Sigmoid colon (tissue), 7 donors: ENCODE measurements at regions of chr15 and their contacts with region 1.

Region 1: DNA sequence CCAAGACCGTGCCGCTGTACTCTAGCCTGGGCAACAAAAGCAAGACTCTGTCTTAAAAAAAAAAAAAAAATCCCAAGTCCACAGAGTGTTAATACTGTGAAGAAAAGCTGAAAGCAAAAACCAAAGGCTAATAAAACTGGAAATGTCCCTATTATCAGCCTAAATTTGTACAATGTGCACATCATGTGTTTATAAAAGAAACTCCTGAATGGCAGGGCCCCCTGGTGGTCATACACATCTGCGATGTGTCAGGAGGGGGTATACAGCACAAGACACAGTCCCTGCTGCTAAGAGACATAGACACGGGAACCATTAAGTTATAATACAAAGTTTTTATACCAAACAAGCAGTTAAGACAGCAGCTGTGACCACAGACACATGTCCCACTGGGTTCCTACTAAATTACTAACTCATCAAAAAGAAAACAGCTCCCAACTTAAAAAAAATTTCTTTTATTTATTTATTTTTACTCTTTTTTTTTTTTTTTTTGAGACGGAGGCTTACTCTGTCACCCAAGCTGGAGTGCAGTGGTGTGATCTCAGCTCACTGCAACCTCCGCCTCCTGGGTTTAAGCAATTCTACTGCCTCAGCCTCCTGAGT is 31.0 kb downstream of the IDH2 start:
- DNase-seq: peak; percentile 90
- H3K4me3 ChIP-seq: no peak overlapping the region
- H3K27ac ChIP-seq: peak overlapping the region; percentile 24 to 58 (median 55)
- H3K4me1 ChIP-seq: peaks cover 0 to 18% (median 17%) of the 10 kb centered on the region in 4 donors
- H3K27me3 ChIP-seq: no peaks in the 10 kb centered on the region
- CTCF ChIP-seq: peak; percentile 64 to 84 (median 74)
- EP300 ChIP-seq: no peak
- POLR2A ChIP-seq: no peak

Region 2: DNA sequence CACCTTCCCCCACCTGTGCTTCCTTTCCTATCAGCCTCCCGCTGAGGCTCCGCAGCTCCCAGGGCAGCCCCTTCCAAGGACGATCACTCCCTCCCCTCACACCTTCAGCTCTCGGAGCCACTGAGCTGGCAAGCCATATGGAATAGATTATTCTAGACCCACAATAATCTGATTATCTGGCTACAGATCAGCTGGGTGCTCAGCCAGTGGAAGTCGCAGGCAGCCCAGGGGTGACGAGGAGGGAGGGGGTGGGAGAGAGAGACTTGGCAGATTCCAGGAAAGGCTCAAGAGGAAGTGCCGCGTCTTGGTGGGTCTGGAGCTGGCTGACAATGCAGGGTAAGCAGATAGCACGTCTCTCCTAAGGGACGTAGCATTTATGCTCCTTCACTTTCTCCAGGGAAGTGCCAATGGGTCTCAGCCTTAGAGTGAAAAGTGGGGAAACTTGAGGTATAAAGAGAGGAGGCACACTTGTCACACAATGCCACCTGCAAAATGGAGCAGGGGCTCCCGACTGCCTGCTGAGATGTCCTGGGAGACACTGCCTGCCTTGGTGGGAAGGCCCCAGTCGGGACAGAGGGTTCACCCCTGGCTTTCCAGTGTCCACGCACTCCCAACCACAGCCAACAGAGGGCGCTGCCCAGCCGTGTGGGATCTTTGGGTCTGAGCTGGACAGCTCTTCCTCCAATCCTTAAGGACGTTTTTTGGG is 310.9 kb before region 1 on chr15:
- intact Hi-C with region 1: loop called (anchors 5 kb)
- DNase-seq: peak; percentile 83
- H3K4me3 ChIP-seq: no peak overlapping the region
- H3K27ac ChIP-seq: peak overlapping the region in 3 of 4 donors; percentile 8 to 63 (median 61)
- H3K4me1 ChIP-seq: peaks cover 0 to 14% (median 7%) of the 10 kb centered on the region in 4 donors
- H3K27me3 ChIP-seq: no peaks in the 10 kb centered on the region
- CTCF ChIP-seq: peak; percentile 75 to 95 (median 92)
- EP300 ChIP-seq: no peak
- POLR2A ChIP-seq: no peak

Region 3: GRCh38 chr15:89893696-89894455 is 177.4 kb before region 1 on chr15 and contains the start of gene AP3S2:
- intact Hi-C with region 1: loop called (anchors 5 kb)
- DNase-seq: peak; percentile 96
- H3K4me3 ChIP-seq: peak within 1 kb of the TSS; percentile 79 to 91 (median 80)
- H3K27ac ChIP-seq: peak within 1 kb of the TSS; percentile 86 to 93 (median 90)
- H3K4me1 ChIP-seq: peaks cover 0 to 20% (median 15%) of the 10 kb centered on the region in 4 donors
- H3K27me3 ChIP-seq: no peaks in the 10 kb centered on the region
- CTCF ChIP-seq: no peak
- EP300 ChIP-seq: no peak
- POLR2A ChIP-seq: peak; percentile 22
- total RNA-seq, gene AP3S2: 24.1 to 37.8 (median 26.6) TPM

Region 4: GRCh38 chr15:89912674-89913396 is 158.5 kb before region 1 on chr15 and contains the start of gene ARPIN:
- intact Hi-C with region 1: loop called (anchors 5 kb)
- DNase-seq: peak; percentile 82
- H3K4me3 ChIP-seq: peak within 1 kb of the TSS; percentile 77 to 96 (median 86)
- H3K27ac ChIP-seq: peak within 1 kb of the TSS; percentile 78 to 92 (median 89)
- H3K4me1 ChIP-seq: peaks cover 0 to 26% (median 17%) of the 10 kb centered on the region in 4 donors
- H3K27me3 ChIP-seq: no peaks in the 10 kb centered on the region
- CTCF ChIP-seq: peak in 2 of 4 experiments; percentile 8 to 9
- EP300 ChIP-seq: no peak
- POLR2A ChIP-seq: no peak
- total RNA-seq, gene ARPIN: 17.9 to 33.5 (median 22.9) TPM

Region 5: DNA sequence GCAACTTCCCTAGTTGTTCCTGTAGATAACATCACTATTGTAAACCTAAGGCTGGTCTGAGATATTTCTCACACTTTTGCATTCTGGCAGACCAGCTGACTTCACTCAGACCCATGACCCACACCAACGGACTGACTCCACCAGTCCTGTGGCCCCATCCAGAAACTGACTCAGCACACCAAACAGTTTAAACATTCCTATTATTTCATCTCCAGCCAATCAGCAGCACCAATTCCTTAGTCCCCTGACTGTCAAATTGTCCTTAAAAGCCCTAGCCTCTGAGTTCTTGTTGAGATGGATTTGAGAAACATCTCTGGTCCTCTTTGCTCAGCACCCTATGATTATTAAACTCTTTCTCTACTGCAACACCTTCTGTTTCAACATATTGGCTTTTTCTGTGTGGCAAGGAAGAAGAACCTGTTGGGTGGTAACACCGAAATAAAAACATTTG is 43.2 kb after region 1 on chr15:
- intact Hi-C with region 1: no loop called
- DNase-seq: no peak
- H3K4me3 ChIP-seq: no peak overlapping the region
- H3K27ac ChIP-seq: peak overlapping the region in 1 of 4 donors; percentile 29
- H3K4me1 ChIP-seq: peaks cover 0 to 5% (median 0%) of the 10 kb centered on the region in 4 donors
- H3K27me3 ChIP-seq: no peaks in the 10 kb centered on the region
- CTCF ChIP-seq: no peak
- EP300 ChIP-seq: no peak
- POLR2A ChIP-seq: no peak

Region 6: DNA sequence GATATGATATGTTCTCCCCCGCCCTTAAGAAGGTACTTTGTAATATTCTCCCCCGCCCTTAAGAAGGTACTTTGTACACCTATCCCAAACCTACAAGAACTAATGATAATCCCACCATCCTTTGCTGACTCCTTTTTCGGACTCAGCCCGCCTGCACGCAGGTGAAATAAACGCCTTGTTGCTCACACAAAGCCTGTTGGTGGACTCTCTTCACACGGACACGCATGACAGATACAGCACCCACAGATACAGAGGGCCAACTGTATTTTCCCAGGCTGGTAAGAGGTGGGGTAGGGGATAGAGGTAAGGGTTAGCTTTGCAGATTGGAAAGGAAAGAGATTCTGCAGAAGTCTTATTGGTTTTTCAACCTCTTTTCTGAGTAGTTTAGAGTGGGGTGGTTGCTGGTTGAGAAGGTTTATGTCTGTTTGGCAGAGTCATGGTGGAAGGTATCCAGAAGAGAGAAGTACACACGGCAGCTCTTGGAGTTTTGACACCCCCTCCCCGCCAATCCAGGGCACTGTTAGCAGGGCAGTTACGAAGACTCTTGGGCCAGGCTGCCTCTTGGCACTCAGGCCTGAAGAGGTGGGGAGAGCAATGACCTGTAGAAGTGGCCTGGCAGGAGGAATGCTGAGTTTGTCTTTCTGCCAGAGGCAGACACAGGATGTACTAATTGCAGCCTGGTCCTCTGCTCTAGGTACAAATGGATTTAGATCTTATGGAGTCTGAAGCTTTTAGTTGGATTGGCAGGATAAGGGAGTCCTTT is 66.9 kb after region 1 on chr15:
- intact Hi-C with region 1: no loop called
- DNase-seq: no peak
- H3K4me3 ChIP-seq: no peak overlapping the region
- H3K27ac ChIP-seq: peak overlapping the region in 3 of 4 donors; percentile 17 to 41 (median 35)
- H3K4me1 ChIP-seq: peaks cover 0 to 13% (median 9%) of the 10 kb centered on the region in 4 donors
- H3K27me3 ChIP-seq: no peaks in the 10 kb centered on the region
- CTCF ChIP-seq: no peak
- EP300 ChIP-seq: no peak
- POLR2A ChIP-seq: no peak

Region 7: DNA sequence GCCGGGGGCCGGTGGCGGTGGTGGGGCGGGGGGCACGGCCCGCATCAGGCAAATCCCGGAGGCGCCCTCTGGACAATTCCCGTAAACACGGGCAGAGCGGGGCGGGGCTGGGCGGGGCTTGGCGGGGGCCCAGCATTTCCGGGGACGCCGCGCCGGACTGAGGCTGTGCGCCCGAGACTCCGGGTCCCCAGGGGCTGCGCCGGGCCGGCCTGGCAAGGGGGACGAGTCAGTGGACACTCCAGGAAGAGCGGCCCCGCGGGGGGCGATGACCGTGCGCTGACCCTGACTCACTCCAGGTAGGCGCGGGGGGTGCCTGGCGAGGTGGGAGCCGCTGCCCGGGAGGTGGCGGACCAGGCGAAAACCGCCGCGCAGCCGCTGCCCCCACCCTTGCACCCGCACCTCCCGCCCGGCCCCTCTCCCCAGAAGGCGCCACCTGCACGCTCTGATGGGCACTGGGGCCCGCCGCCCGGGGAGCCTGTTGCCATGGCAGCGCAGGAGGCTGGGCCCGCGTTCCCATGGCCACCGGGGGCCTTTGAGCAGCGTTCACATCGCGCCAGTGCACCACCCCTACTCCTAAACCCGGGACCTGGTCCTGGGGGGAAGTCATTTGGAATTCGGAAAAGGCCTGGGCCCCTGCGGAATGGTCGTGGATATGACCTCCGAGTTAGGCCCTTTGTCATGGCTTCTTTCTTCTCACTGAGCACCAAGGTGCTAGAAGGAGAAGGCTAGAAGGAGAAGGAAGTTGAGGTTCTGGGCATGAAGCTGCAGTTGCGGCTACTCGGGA is 113.7 kb after region 1 on chr15:
- intact Hi-C with region 1: no loop called
- DNase-seq: peak; percentile 85
- H3K4me3 ChIP-seq: peak overlapping the region; percentile 74 to 94 (median 87)
- H3K27ac ChIP-seq: peak overlapping the region; percentile 96 to 99 (median 97)
- H3K4me1 ChIP-seq: peaks cover 0 to 58% (median 52%) of the 10 kb centered on the region in 4 donors
- H3K27me3 ChIP-seq: no peaks in the 10 kb centered on the region
- CTCF ChIP-seq: no peak
- EP300 ChIP-seq: peak in 1 of 4 donors; percentile 31
- POLR2A ChIP-seq: peak; percentile 50 to 77